Activated CD4-positive, alpha-beta memory T cell treated with anti-CD3 and anti-CD28 coated beads, Interleukin-2, amount 10 ng/mL, durations not matched to agents 7 days and 5 days (primary cell): ENCODE measurements at regions of chr11 and their contacts with region 1.

Region 1: GRCh38 chr11:14300661-14301304 is 58.2 kb downstream of the RRAS2 start:
- DNase-seq: peak; percentile 64
- H3K4me3 Mint-ChIP-seq: no peak overlapping the region
- H3K27ac Mint-ChIP-seq: no peak overlapping the region
- H3K4me1 Mint-ChIP-seq: peaks cover 18% of the 10 kb centered on the region
- H3K27me3 Mint-ChIP-seq: no peaks in the 10 kb centered on the region

Region 2: GRCh38 chr11:14125529-14125928 is 175.3 kb before region 1 on chr11:
- CTCF ChIA-PET with region 1: no interaction called
- POLR2A ChIA-PET with region 1: no interaction called
- DNase-seq: no peak
- H3K4me3 Mint-ChIP-seq: no peak overlapping the region
- H3K27ac Mint-ChIP-seq: no peak overlapping the region
- H3K4me1 Mint-ChIP-seq: no peaks in the 10 kb centered on the region
- H3K27me3 Mint-ChIP-seq: no peaks in the 10 kb centered on the region

Region 3: DNA sequence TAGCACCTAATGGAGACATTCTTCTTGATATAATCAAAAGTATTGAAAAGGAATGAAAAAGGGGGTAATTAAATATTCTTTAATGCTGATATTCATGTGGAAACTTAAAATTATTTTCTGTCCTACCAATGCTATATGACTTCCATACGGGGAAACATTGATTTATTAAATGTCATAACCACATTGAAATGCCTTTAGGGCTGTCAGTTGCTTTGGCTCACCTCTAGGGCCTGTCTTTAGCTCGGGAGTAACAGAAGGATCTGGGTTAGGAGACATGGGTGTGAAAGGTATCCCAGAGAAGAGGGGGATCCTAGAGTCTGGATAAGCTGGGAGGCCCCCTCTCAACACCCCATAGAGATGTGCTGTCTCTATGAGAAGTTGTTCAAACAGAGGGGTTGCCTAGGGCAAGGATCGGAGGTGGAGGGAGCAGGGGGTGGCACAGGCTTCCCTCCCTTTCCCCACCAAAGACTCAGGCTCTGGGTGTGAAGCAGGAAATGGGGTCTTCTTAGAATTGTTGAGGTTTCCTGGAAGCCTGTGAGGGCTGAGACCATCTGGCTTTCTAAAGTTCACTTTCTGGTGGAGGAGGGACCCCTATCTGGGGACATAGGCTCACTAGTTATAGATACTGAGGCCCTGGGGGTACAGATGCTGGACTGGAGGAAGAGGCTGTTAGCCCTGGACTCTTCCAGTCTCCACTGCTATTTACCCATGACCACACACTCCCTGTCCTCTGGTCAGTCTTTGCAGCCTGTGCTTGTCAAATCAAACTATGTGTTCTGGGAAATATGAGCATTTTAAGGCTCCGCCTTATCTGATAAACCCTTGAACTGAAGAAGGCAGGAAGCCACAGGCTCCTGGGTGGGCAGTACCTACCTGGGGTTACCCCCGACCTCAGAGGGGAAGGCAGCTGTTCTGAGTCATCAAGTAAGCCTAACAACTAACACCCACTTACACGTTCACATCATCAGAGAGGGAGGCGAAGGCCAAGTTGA is 114.0 kb after region 1 on chr11:
- CTCF ChIA-PET with region 1: interaction called, 36 read pairs
- POLR2A ChIA-PET with region 1: no interaction called
- DNase-seq: peak; percentile 88
- H3K4me3 Mint-ChIP-seq: peak overlapping the region; percentile 19
- H3K27ac Mint-ChIP-seq: peak overlapping the region; percentile 82
- H3K4me1 Mint-ChIP-seq: peaks cover 72% of the 10 kb centered on the region
- H3K27me3 Mint-ChIP-seq: no peaks in the 10 kb centered on the region